MCF 10A (cell line): ENCODE measurements at regions of chr4 and their contacts with region 1.

Region 1: DNA sequence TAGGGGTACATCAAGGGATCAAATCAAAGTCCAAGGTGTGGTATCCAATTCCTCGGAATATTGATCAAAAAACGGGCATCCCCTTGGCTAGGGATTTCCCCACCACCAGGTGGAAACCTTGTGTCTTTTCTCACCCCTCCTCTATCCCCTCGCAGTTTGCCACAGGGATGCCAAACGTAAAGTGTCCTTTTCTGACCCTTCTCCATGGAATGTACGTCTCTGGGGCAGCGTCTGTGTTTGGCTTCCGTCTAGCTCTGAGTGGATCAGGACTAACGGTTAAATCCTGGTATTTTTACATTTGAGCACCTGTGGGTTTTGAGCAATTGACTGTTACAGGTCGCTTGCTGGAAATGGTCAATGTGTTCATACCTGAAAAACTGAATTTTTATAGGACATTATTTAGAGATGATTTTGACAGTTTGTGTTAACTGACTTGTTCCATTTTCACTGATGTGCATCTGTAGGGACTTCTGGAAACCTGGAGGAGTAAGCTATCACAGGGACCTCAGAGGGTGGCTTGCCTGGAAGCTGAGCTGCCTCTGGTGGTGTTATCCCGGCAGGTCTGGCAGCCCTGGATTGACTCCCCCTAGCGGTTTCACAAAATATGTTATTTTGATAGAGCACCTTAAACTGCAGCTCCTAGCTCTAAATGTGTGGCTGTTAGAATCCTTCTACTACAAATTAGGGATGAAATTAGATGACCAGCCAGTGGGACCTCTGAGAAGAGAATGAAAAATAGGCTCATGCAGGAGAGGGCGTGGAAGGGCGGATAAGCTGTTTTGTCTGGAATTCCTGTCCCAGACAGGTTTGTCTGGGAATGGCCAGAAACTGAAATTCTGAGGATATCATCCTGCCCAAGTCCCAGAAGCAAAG is 8.8 kb upstream of the MGST2 start:
- DNase-seq: peak; percentile 83
- H3K4me3 Mint-ChIP-seq: peak overlapping the region; percentile 64
- H3K27ac Mint-ChIP-seq: peak overlapping the region; percentile 85
- H3K4me1 Mint-ChIP-seq: peaks cover 25% of the 10 kb centered on the region
- H3K27me3 Mint-ChIP-seq: no peaks in the 10 kb centered on the region
- CTCF ChIP-seq: peak; percentile 63

Region 2: GRCh38 chr4:139642364-139642763 is 14.5 kb before region 1 on chr4:
- CTCF ChIA-PET with region 1: interaction called, 30 read pairs
- POLR2A ChIA-PET with region 1: interaction called, 13 read pairs
- intact Hi-C with region 1: no loop called
- DNase-seq: no peak
- H3K4me3 Mint-ChIP-seq: no peak overlapping the region
- H3K27ac Mint-ChIP-seq: no peak overlapping the region
- H3K4me1 Mint-ChIP-seq: peaks cover 40% of the 10 kb centered on the region
- H3K27me3 Mint-ChIP-seq: no peaks in the 10 kb centered on the region
- CTCF ChIP-seq: no peak

Region 3: DNA sequence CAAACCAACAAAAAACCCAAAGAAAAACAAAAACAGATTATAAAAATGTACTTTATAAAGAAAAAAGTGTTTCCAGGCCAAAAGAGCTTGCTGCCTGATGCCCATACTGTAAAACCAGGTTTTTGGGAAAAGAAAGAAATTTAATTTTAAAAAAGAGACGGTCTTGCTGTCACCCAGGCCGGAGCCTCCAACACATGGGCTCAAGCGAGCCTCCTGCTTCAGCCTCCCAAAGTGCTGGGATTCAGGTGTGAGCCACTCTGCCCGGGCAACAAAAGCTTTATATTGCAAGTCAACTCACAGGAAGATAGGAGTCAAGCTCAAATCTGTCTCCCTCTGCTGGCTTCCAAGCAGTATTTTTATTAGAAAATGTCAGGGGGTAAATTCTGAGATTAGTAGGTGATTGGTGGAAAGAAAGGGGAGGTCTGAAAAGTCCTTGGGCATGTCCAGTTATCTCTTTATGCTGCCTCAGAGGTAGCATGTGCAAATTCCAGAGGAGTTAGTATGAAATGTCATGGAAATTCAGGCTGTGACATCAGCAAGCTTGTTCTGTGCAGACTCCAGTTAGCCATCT is 48.1 kb after region 1 on chr4:
- CTCF ChIA-PET with region 1: interaction called, 16 read pairs
- POLR2A ChIA-PET with region 1: no interaction called
- intact Hi-C with region 1: no loop called
- DNase-seq: peak; percentile 16
- H3K4me3 Mint-ChIP-seq: no peak overlapping the region
- H3K27ac Mint-ChIP-seq: no peak overlapping the region
- H3K4me1 Mint-ChIP-seq: no peaks in the 10 kb centered on the region
- H3K27me3 Mint-ChIP-seq: no peaks in the 10 kb centered on the region
- CTCF ChIP-seq: no peak

Region 4: DNA sequence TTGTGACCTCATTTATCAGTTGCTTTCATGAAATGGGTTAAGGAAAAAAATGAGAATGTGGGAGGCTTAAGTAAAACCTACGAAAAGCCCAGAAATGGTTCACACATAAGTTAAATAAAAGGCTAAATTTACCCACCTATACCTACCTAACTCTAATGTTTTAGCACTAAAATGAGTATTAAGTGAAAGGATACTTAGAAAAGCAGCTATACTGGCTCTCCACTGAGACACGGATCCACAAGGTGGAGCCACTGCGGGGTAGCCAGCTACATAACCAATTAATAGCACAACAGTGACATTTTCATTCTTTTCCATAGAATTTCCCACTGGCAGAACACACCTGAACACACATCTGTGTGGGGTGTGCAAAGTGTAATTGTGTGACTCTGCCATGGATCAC is 395.2 kb after region 1 on chr4:
- CTCF ChIA-PET with region 1: interaction called, 7 read pairs
- POLR2A ChIA-PET with region 1: no interaction called
- intact Hi-C with region 1: loop called (anchors 5 kb)
- DNase-seq: peak; percentile 47
- H3K4me3 Mint-ChIP-seq: no peak overlapping the region
- H3K27ac Mint-ChIP-seq: no peak overlapping the region
- H3K4me1 Mint-ChIP-seq: peaks cover 13% of the 10 kb centered on the region
- H3K27me3 Mint-ChIP-seq: no peaks in the 10 kb centered on the region
- CTCF ChIP-seq: peak; percentile 57

Region 5: DNA sequence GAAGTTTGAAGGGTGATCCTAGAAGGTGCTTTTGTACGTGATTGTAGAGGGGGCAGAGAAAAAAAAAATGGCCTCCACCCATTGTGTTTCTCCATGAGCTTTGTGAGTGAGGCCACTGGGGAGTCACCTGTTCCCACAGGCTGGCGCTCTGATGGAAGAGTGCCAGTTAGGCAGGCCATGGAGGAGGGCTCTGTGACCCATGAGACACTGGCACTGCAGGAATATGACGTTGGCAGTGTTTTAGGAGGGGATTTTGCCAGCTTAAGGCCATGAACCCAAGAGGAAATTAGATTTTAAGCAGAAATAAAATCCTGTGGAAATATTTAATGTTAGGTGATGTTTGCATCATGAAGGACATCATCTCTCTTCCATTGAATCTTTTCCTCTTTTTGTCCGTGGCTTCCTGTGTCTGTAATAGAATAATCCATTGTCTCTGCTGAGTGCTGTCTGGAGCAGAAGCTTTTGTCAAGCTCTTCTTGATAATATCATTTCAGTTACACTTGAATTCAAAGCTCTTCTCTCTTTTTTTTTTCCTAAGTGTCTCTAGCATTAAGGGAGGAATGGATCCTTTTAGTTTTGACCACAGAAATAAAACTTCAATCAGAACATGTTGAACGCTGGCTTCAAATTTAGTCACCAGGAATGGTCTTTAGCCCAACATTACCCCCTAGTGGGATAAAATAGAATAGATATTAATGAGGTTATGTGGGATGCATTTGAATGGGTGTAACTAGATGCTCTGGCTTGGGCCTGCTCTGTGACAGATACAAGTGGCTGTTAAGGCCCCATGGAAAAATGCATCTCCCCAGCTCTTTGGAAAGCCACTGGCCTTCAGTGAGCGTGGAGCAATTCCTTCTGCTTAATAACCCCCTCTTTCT is 952.9 kb after region 1 on chr4:
- CTCF ChIA-PET with region 1: interaction called, 9 read pairs
- POLR2A ChIA-PET with region 1: no interaction called
- intact Hi-C with region 1: loop called (anchors 5 kb)
- DNase-seq: peak; percentile 66
- H3K4me3 Mint-ChIP-seq: no peak overlapping the region
- H3K27ac Mint-ChIP-seq: no peak overlapping the region
- H3K4me1 Mint-ChIP-seq: peaks cover 6% of the 10 kb centered on the region
- H3K27me3 Mint-ChIP-seq: no peaks in the 10 kb centered on the region
- CTCF ChIP-seq: peak; percentile 70